Activated T-helper 1 cell treated with anti-CD3 and anti-CD28 coated beads, Interleukin-12 subunit alpha, Interleukin-12 subunit beta, Interleukin-2, Interleukin-4 antibody, amounts not matched to agents 30 ng/mL and 10 ng/mL and 1 ng/mL, durations not matched to agents 14 hours and 24 hours and 36 hours (primary cell): ENCODE measurements at regions of chr15 and their contacts with region 1.

Region 1: GRCh38 chr15:63504247-63504978 is at the start of gene USP3:
- DNase-seq: peak; percentile 91
- H3K4me3 Mint-ChIP-seq: peak within 1 kb of the TSS; percentile 93
- H3K27ac Mint-ChIP-seq: peak within 1 kb of the TSS; percentile 93
- H3K4me1 Mint-ChIP-seq: peaks cover 83% of the 10 kb centered on the region
- H3K27me3 Mint-ChIP-seq: no peaks in the 10 kb centered on the region
- total RNA-seq, gene USP3: 46.9 and 58.9 TPM in 2 replicates

Region 2: GRCh38 chr15:63291507-63291906 is 212.9 kb before region 1 on chr15:
- intact Hi-C with region 1: no loop called
- DNase-seq: no peak
- H3K4me3 Mint-ChIP-seq: no peak overlapping the region
- H3K27ac Mint-ChIP-seq: no peak overlapping the region
- H3K4me1 Mint-ChIP-seq: peaks cover 8% of the 10 kb centered on the region
- H3K27me3 Mint-ChIP-seq: no peaks in the 10 kb centered on the region

Region 3: DNA sequence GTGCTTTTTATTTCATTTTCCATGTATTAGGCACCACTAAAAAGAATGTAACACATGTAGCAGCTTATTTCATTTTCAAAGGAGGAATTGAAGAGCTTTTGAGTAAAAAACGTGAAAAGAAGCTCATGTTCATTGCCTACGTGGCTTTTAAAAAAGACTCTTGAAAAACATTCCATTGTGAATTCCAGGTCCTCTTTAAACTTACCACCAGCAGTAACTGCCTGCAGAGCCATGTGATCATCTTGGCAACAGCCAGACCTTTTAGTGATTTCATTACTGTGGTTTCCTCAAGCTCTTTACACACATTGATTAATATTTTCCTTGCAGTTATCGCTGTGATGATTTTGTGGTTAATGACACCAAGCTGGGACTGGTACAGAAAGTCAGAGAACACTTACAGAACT is 49.0 kb after region 1 on chr15:
- intact Hi-C with region 1: loop called (anchors 5 kb)
- DNase-seq: no peak
- H3K4me3 Mint-ChIP-seq: no peak overlapping the region
- H3K27ac Mint-ChIP-seq: peak overlapping the region; percentile 40
- H3K4me1 Mint-ChIP-seq: peaks cover 34% of the 10 kb centered on the region
- H3K27me3 Mint-ChIP-seq: no peaks in the 10 kb centered on the region

Region 4: GRCh38 chr15:63600616-63601025 is 96.2 kb after region 1 on chr15:
- intact Hi-C with region 1: loop called (anchors 1 kb)
- DNase-seq: peak; percentile 86
- H3K4me3 Mint-ChIP-seq: peak overlapping the region; percentile 88
- H3K27ac Mint-ChIP-seq: peak overlapping the region; percentile 87
- H3K4me1 Mint-ChIP-seq: peaks cover 51% of the 10 kb centered on the region
- H3K27me3 Mint-ChIP-seq: peaks cover 2% of the 10 kb centered on the region